Activated B cell treated with CpG ODN at 0.5 μM for 24 hours (primary cell): ENCODE measurements at regions of chr2 and their contacts with region 1.

Region 1: DNA sequence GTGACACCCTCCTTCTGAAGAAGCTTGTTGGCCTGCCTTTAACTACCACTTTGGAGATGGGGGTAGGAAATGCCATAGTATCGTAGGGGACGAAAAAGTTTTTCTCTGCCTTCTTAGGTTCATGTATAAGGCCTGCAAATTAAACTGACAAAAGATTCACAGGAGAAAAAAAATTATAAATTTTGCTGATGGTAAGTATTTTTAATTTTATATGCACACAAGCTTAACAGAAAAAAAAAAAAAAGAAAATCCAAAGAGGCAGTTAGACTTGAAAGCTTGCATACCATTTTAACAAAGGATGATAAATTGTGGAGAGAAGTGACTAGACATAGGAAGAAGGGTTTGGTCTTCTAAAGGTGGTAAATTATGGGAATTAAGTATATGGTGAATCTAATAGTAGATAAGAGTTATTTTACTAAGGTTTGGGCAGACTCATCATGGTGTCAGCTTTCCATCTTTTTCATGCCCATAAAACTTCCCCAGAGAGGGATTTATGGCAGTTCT is 62.5 kb upstream of the B3GNT2 start:
- DNase-seq: no peak
- ATAC-seq: no peak
- H3K4me3 Mint-ChIP-seq: no peak overlapping the region
- H3K27ac Mint-ChIP-seq: no peak overlapping the region
- H3K4me1 Mint-ChIP-seq: peaks cover 34% of the 10 kb centered on the region
- H3K27me3 Mint-ChIP-seq: no peaks in the 10 kb centered on the region
- CTCF ChIP-seq: no peak

Region 2: GRCh38 chr2:62065243-62065642 is 68.1 kb before region 1 on chr2:
- CTCF ChIA-PET with region 1: no interaction called
- POLR2A ChIA-PET with region 1: interaction called, 4 read pairs
- intact Hi-C with region 1: loop called (anchors 5 kb)
- DNase-seq: no peak
- ATAC-seq: peak; percentile 16
- H3K4me3 Mint-ChIP-seq: no peak overlapping the region
- H3K27ac Mint-ChIP-seq: peak overlapping the region; percentile 79
- H3K4me1 Mint-ChIP-seq: peaks cover 27% of the 10 kb centered on the region
- H3K27me3 Mint-ChIP-seq: no peaks in the 10 kb centered on the region
- CTCF ChIP-seq: no peak

Region 3: DNA sequence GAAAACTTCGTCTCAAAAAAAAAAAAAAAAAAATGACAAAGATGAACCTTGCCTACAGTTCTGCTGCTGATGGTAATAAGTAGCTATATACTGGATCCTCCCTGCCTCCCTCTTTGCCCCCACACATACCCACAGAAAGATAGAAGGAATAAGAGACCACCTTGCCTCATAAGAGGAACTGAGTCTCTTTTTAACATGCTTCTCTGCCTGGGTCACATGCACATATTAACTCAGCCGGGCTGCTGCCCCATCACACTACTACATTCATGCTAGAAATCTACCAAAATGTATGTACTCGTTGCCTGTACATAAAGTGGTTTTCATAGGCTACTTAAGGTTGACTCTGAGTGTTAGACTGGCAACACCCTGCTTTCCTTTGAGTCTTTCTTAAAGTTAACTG is 16.4 kb before region 1 on chr2:
- CTCF ChIA-PET with region 1: no interaction called
- POLR2A ChIA-PET with region 1: interaction called, 13 read pairs
- intact Hi-C with region 1: no loop called
- DNase-seq: no peak
- ATAC-seq: peak; percentile 28
- H3K4me3 Mint-ChIP-seq: no peak overlapping the region
- H3K27ac Mint-ChIP-seq: no peak overlapping the region
- H3K4me1 Mint-ChIP-seq: peaks cover 39% of the 10 kb centered on the region
- H3K27me3 Mint-ChIP-seq: no peaks in the 10 kb centered on the region
- CTCF ChIP-seq: no peak

Region 4: GRCh38 chr2:62145478-62146100 is 12.2 kb after region 1 on chr2:
- CTCF ChIA-PET with region 1: no interaction called
- POLR2A ChIA-PET with region 1: interaction called, 6 read pairs
- intact Hi-C with region 1: loop called (anchors 2 kb)
- DNase-seq: no peak
- ATAC-seq: peak; percentile 51
- H3K4me3 Mint-ChIP-seq: peak overlapping the region; percentile 28
- H3K27ac Mint-ChIP-seq: peak overlapping the region; percentile 57
- H3K4me1 Mint-ChIP-seq: peaks cover 53% of the 10 kb centered on the region
- H3K27me3 Mint-ChIP-seq: no peaks in the 10 kb centered on the region
- CTCF ChIP-seq: no peak

Region 5: GRCh38 chr2:62238236-62238635 is 104.9 kb after region 1 on chr2:
- CTCF ChIA-PET with region 1: no interaction called
- POLR2A ChIA-PET with region 1: no interaction called
- intact Hi-C with region 1: no loop called
- DNase-seq: no peak
- ATAC-seq: no peak
- H3K4me3 Mint-ChIP-seq: no peak overlapping the region
- H3K27ac Mint-ChIP-seq: no peak overlapping the region
- H3K4me1 Mint-ChIP-seq: peaks cover 10% of the 10 kb centered on the region
- H3K27me3 Mint-ChIP-seq: no peaks in the 10 kb centered on the region
- CTCF ChIP-seq: no peak

Region 6: GRCh38 chr2:62306751-62307468 is 173.5 kb after region 1 on chr2:
- CTCF ChIA-PET with region 1: no interaction called
- POLR2A ChIA-PET with region 1: interaction called, 11 read pairs
- intact Hi-C with region 1: no loop called
- DNase-seq: no peak
- ATAC-seq: peak; percentile 64
- H3K4me3 Mint-ChIP-seq: peak overlapping the region; percentile 42
- H3K27ac Mint-ChIP-seq: peak overlapping the region; percentile 62
- H3K4me1 Mint-ChIP-seq: peaks cover 78% of the 10 kb centered on the region
- H3K27me3 Mint-ChIP-seq: no peaks in the 10 kb centered on the region
- CTCF ChIP-seq: no peak